ENCODE measurements at regions of chr5 and their contacts with region 1.

Region 1: DNA sequence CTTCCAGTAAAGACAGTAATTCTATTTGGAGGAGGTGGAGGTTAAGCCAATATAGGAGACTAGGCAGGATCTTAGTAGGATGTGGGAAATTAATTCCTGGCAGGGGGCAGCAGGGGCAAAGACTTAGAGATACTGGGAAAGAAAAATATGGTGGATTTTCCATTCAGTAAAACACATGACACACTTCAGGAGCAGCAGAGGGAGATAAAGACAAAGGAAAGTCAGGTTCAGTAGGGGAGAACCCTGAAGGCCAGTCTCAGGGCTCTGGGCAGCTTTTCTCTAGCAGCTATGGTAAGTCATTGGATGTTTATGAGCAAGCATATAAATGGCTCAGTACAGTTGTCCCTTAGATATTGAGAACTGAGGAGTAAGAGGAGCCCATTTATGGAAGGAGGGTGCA is 105.5 kb downstream of the PJA2 start:
- DNase-seq: peak in 1 of 4 experiments; percentile 11
- ATAC-seq: peak; percentile 57
- H3K4me3 ChIP-seq: no peak overlapping the region
- H3K27ac ChIP-seq: no peak overlapping the region
- H3K4me1 ChIP-seq: no peaks in the 10 kb centered on the region
- H3K27me3 ChIP-seq: peaks cover 23 to 24% of the 10 kb centered on the region in 2 experiments
- CTCF ChIP-seq: peak in 1 of 3 experiments; percentile 32; a peak in 2 of 6 replicates
- EP300 ChIP-seq: no peak
- POLR2A ChIP-seq: no peak
- RAD21 ChIP-seq: peak; percentile 32 to 74

Region 2: DNA sequence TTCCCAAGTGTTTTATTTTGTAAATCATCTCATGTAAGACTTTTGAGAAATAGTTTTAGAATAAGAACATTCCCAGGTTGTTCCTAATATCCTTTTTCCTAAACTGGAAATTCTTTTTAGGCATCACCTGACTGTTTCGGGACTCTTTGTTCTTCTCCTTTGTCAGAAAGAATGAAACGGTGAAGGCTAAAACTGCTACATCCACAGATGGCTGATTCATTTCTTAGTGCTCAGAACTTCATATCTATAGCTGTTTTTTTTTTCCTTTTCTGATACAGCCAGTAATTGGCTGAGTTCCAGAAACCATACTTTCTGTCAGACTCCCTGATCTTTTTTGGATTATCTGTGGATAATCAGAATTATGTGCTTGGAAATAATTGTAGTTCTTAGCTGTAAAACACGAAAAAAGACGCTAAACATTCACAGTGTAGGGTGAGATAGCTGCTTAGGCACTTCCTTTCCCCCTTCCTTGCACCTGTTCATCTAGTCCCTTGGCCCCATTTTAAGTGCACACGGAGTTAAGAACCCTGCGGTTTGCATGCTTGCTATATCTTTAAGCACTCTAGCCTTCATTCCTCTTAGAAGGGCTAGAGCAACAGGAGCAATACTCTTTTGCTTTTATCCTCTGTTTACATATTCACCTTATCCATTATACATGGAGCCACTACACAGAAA is 178.4 kb before region 1 on chr5:
- CTCF ChIA-PET with region 1: no interaction called
- POLR2A ChIA-PET with region 1: no interaction called
- in situ Hi-C with region 1: no loop called
- intact Hi-C with region 1: loop called (anchors 10 kb)
- DNase-seq: peak in 1 of 4 experiments; percentile 10
- ATAC-seq: 0 out of 3 replicates have a peak, but pooled peaks have one; percentile 32
- H3K4me3 ChIP-seq: no peak overlapping the region
- H3K27ac ChIP-seq: no peak overlapping the region
- H3K4me1 ChIP-seq: no peaks in the 10 kb centered on the region
- H3K27me3 ChIP-seq: no peaks in the 10 kb centered on the region
- CTCF ChIP-seq: no peak
- EP300 ChIP-seq: no peak
- POLR2A ChIP-seq: no peak
- RAD21 ChIP-seq: no peak

Region 3: DNA sequence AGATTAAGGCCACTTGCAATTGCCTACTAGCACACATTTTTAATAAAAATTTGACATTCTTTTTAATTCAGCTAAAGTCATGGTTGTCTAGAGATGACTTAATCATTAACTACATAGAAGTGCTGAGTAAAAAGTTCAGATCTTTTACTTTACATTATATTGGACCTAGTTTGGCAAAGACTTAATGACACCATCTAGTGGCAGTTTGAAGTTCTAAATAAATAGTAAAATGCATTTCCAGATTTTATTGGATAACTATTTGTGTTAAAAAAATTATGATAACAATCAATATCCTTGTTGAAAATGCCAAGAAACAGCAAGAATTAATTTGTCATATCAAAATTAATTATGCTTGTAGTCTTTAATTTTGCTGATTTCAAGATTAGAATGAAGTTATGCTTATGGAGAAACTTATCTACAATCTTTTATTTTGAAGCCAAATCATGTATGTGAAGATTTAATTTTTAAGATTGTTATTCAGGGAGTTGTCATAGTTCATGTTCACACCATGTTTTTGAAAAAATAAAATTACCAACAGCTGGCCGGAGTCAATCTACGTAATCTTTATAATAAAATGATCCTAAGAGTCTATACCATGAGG is 175.1 kb after region 1 on chr5:
- CTCF ChIA-PET with region 1: no interaction called
- POLR2A ChIA-PET with region 1: no interaction called
- in situ Hi-C with region 1: no loop called
- intact Hi-C with region 1: loop called (anchors 10 kb)
- DNase-seq: no peak
- ATAC-seq: no peak
- H3K4me3 ChIP-seq: no peak overlapping the region
- H3K27ac ChIP-seq: no peak overlapping the region
- H3K4me1 ChIP-seq: no peaks in the 10 kb centered on the region
- H3K27me3 ChIP-seq: no peaks in the 10 kb centered on the region; a peak in 2 of 5 replicates
- CTCF ChIP-seq: peak in 1 of 3 experiments; percentile 56; a peak in 2 of 6 replicates
- EP300 ChIP-seq: no peak
- POLR2A ChIP-seq: no peak
- RAD21 ChIP-seq: peak; percentile 27 to 61

Measured in K562 (cell line).